GM10248 (cell line): ENCODE measurements at regions of chr15 and their contacts with region 1.

Region 1: DNA sequence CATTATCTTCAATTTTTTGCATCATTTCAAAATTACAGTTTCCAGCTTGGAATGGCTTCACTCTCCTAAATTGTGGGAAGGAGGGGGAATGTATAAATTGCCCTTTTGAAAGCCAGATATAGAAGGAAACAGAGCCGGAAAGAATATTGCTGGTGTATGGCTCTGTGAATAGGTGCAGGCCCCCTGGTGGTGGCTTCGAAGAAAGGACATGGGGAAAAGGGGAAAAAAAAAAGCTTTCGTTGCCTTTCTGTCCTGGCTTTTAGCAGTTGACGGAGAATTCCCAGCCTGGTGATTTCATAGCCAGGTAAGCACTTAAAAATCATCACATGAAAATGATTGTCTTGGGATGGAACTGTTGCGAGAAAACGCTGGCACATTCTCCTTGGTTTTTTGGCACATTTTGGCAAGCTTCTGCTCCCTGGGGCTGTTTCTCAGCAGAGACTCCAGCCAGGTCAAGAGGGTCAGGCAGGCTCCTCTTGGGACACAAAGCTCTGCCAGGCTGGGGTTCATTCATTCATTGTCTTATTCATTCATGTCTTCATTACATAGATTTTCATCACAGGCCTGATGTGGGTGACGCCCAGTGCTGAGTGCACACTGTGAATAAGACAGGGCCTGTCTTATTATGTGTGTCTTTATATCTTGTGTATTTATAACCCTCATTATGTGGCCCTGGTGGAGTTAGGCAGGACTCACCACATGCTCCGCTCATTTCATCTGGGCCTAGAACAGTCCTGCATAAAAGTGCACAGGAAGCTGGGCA is 300.0 kb upstream of the TPM1 start:
- DNase-seq: peak; percentile 60
- CTCF ChIP-seq: peak; percentile 82

Region 2: DNA sequence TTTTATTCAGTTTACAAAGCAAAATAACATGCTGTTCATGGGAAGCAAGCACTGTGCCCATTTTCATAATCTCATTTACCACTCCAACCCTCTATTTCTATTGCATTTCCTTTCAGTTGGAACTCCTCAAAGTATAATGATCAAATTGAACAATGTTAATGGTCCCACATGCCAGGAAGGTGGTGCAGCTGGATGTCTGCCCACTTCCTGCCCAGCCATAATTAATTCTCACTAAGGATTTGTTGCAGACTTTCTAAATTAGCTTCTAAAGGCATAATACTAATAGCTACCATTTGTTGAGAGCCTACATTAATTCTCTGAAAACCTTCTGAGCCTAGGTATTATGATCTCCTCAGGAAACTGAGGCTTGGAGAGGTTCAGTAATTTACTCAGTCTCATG is 16.1 kb before region 1 on chr15:
- CTCF ChIA-PET with region 1: interaction called, 11 read pairs
- POLR2A ChIA-PET with region 1: no interaction called
- DNase-seq: no peak
- CTCF ChIP-seq: no peak

Region 3: GRCh38 chr15:62732078-62732477 is 10.5 kb before region 1 on chr15:
- CTCF ChIA-PET with region 1: interaction called, 13 read pairs
- POLR2A ChIA-PET with region 1: no interaction called
- DNase-seq: no peak
- CTCF ChIP-seq: no peak

Region 4: DNA sequence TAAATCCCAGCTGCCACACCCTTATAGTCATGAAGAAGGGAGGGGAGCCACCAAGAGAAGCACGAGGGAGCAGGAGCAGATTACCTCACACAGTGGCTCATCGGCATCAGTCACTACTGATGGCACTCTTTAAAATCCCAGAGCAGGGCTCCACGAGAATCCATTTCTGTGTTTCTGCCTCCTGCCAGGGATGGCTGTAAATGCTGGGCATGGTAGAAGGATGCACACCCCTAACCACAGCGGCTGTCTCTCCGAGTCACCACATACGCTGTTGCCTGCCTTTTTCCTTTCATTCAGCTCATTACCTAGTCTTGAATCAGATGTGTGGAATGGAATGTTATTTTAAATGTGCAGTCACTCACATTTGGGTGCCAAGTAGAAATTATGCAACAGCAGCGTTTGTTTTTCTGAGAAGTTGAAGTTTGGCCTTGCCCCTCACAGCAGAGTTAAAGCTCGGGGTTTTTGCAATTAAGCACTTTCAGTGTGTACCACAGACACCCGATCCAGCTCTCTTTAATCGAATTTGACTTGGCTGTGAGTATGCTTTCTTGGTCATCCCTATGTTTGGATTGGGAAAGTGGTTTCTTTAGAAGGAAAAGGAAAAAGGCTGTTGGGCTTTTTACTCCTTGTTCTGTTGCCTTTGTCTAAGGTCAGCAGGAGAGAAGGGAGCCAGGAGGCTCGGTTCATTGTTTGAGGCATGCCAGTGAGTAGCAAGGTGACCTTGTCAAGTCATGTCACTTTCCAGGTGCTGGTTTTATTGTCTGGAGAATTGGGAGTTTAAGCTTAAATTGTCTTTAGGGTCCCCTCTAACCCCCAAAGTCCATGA is 15.7 kb after region 1 on chr15:
- CTCF ChIA-PET with region 1: interaction called, 10 read pairs
- POLR2A ChIA-PET with region 1: no interaction called
- DNase-seq: no peak
- CTCF ChIP-seq: no peak